Right cardiac atrium (tissue), 5 donors: ENCODE measurements at regions of chr4 and their contacts with region 1.

Region 1: DNA sequence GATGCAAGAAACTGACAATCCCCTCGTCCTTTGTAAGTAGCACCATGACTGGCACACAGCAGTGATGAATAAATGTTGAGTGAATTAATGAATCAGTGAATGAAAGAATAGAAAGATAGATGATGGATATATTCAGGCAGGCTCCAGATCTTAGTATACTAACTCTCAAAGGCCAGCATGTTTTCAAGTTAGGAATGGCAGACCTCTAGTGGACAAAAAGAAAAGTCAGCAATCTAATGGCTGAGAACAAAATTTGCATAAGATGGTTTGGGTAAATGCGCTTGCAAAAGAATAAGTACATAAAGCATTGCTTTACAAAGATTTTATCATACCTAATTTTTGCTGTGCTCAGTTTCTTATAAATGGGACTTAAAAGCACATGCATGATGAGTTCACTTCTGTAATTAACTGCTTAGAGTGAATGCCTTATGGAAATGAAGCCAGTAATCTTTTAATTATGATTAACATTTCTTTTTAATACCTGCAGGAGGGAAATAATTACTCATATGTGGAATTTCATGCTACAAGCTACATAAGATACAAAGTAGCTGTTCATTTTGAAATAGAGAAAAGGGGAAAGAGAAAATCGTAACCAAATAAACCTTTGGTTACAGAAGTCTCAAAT is 126.9 kb upstream of the GPRIN3 start:
- DNase-seq: no peak
- ATAC-seq: peak; percentile 55 to 57
- H3K4me3 ChIP-seq: no peak overlapping the region
- H3K27ac ChIP-seq: no peak overlapping the region
- H3K4me1 ChIP-seq: no peaks in the 10 kb centered on the region
- H3K27me3 ChIP-seq: no peaks in the 10 kb centered on the region

Region 2: GRCh38 chr4:89226665-89227574 is 207.6 kb before region 1 on chr4:
- intact Hi-C with region 1: loop called (anchors 2 to 5 kb)
- DNase-seq: peak; percentile 67 to 84 (median 75)
- ATAC-seq: peak; percentile 92 to 93
- H3K4me3 ChIP-seq: no peak overlapping the region
- H3K27ac ChIP-seq: no peak overlapping the region
- H3K4me1 ChIP-seq: no peaks in the 10 kb centered on the region
- H3K27me3 ChIP-seq: no peaks in the 10 kb centered on the region

Region 3: GRCh38 chr4:89382439-89382838 is 52.0 kb before region 1 on chr4:
- intact Hi-C with region 1: no loop called
- DNase-seq: no peak
- ATAC-seq: no peak
- H3K4me3 ChIP-seq: no peak overlapping the region
- H3K27ac ChIP-seq: no peak overlapping the region
- H3K4me1 ChIP-seq: no peaks in the 10 kb centered on the region
- H3K27me3 ChIP-seq: no peaks in the 10 kb centered on the region

Region 4: DNA sequence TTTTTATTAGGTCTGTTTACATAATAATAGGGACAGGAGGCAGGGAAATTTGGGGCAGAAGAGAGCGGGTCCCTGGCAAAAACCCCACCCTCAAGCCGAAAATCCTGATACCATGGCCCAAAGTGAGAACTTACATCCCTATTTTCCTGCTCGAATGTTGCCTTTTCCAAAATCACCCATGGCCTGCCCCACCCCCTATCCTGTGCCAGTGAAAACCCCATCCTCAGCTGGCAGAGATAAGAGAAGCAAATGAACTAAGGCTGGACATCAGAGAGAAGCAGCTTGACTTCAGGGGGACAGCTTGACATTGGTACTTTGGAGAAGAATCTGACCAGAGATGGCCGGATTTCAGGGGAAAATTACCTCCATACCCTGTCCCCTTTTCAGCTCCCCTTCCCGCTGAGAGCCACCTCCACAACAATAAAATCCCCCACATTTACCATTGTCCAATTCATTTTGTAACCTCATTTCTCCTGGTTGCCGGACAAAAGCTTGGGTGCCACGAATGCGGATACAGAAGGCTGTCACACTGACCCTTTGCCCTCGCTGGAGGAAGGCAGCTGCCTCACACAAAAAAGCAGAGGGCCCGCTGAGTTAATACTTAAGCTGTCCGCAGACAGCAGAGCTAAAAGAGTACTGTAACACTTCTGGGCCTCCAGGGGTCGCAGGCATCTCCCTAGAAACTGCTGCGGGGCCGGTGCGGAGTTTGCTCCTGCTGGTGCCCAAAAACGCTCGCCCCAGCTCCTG is 206.3 kb after region 1 on chr4:
- intact Hi-C with region 1: no loop called
- DNase-seq: peak; percentile 23 to 55 (median 43)
- ATAC-seq: peak; percentile 38 to 68
- H3K4me3 ChIP-seq: peak overlapping the region; percentile 25
- H3K27ac ChIP-seq: no peak overlapping the region
- H3K4me1 ChIP-seq: no peaks in the 10 kb centered on the region
- H3K27me3 ChIP-seq: no peaks in the 10 kb centered on the region

Region 5: DNA sequence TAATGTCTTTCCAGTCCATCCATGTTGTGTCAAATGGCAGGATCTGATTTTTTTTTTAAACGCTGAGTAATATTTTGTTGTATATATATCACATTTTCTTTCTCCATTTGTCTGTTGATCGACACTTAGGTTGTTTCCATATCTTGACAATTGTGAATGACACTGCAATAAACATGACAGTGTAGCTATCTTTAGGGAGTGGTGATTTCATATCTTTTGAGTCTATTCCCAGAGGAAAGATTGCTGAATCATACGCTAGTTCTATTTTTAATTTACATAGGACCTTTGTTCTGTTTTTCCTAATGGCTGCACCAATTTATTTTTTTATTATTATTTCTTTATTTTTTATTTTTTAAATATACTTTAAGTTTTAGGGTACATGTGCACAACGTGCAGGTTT is 1163.5 kb after region 1 on chr4:
- intact Hi-C with region 1: no loop called
- DNase-seq: no peak
- ATAC-seq: peak in 1 of 2 donors; percentile 59
- H3K4me3 ChIP-seq: no peak overlapping the region
- H3K27ac ChIP-seq: no peak overlapping the region
- H3K4me1 ChIP-seq: peaks cover 3% of the 10 kb centered on the region
- H3K27me3 ChIP-seq: no peaks in the 10 kb centered on the region